Calu3 (cell line): ENCODE measurements at regions of chr5 and their contacts with region 1.

Region 1: DNA sequence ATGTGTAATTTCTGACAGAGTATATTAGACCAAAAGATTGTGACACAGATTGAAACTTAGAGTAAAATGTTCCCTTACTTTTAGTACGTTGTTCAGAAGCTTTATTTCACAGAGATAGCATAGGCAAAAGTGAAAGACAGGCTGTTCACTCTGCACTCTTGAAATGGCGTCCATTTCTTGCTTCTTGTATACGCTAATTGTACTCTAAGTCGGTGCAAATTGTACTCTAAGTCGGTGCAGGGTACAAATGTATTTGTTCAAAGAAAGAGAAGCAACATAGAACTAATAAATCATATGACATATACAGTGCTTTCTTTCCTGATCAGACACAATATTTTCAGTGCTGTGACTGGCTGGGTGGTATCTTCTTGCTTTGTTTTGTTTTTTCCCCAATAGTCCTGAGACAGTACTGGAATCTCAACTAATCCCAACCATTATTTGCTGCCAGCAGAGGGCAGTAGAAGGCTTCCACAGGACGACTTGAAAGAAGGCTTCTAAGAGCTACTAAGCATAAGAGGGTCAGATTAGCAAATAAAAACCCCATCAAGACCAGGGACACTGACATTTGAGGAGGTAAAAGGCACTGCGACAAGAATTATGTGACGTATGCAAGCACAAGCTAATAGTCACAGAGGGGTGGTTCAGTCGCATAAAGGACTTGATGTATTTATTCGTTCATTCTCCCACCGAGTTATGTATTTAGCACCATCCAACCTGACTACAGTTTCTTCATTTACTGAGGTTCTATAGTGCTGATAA is 831.8 kb downstream of the TAF11L14 start:
- DNase-seq: peak; percentile 69
- H3K4me3 Mint-ChIP-seq: no peak overlapping the region
- H3K27ac Mint-ChIP-seq: peak overlapping the region; percentile 56
- H3K4me1 Mint-ChIP-seq: no peaks in the 10 kb centered on the region
- H3K27me3 Mint-ChIP-seq: no peaks in the 10 kb centered on the region
- CTCF ChIP-seq: peak; percentile 49

Region 2: GRCh38 chr5:18393589-18394442 is 72.2 kb before region 1 on chr5:
- CTCF ChIA-PET with region 1: no interaction called
- intact Hi-C with region 1: loop called (anchors 1 kb)
- DNase-seq: peak; percentile 64
- H3K4me3 Mint-ChIP-seq: no peak overlapping the region
- H3K27ac Mint-ChIP-seq: no peak overlapping the region
- H3K4me1 Mint-ChIP-seq: no peaks in the 10 kb centered on the region
- H3K27me3 Mint-ChIP-seq: no peaks in the 10 kb centered on the region
- CTCF ChIP-seq: peak; percentile 80

Region 3: GRCh38 chr5:18699681-18700080 is 233.7 kb after region 1 on chr5:
- CTCF ChIA-PET with region 1: interaction called, 12 read pairs
- intact Hi-C with region 1: loop called (anchors 1 kb)
- DNase-seq: no peak
- H3K4me3 Mint-ChIP-seq: no peak overlapping the region
- H3K27ac Mint-ChIP-seq: no peak overlapping the region
- H3K4me1 Mint-ChIP-seq: peaks cover 9% of the 10 kb centered on the region
- H3K27me3 Mint-ChIP-seq: no peaks in the 10 kb centered on the region
- CTCF ChIP-seq: no peak